ENCODE measurements at regions of chr12 and their contacts with region 1.

Region 1: GRCh38 chr12:40107098-40107802 is 1.4 kb upstream of the SLC2A13 start:
- DNase-seq: peak; percentile 82 to 92 (median 88)
- H3K4me3 ChIP-seq: peak overlapping the region; percentile 9 to 97 (median 83)
- H3K27ac ChIP-seq: peak overlapping the region in 27 of 59 donors; percentile 0 to 90 (median 79)
- H3K27me3 ChIP-seq: peaks cover 0 to 6% (median 0%) of the 10 kb centered on the region in 45 donors
- CTCF ChIP-seq: peak; percentile 89 to 100 (median 97)

Region 2: DNA sequence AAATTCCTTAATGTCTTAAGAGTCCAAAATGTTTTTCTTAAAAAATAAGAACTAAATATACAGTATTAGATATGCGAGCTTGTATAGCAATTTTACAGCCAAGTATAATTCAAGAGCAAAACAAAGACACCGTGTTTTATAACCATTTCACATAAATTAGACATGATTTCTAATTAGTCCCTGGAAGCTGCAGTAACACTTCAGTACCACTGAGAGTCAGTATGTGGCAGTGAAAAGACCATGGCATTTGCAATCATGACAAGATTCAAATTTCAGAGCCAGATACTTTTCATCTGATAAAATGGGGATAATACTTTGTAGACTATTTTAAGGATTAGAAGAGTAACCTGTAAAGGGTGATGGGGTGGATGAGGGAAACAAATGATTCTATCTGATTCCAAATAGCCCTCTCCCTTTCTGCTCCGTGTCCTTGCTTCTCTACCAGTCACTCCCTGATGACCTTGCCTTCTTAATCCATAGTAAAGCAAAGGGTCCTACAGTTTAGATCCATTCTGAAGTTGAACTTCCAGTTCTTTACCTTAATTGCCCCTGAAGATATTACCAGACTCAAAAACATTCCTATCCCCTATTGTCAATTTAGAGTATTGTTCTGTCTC is 342.2 kb before region 1 on chr12:
- intact Hi-C with region 1: loop called in 1 of 2 experiments (anchors 5 kb)
- DNase-seq: no peak
- H3K4me3 ChIP-seq: no peak overlapping the region
- H3K27ac ChIP-seq: no peak overlapping the region
- H3K27me3 ChIP-seq: no peaks in the 10 kb centered on the region
- CTCF ChIP-seq: peak; percentile 45 to 84 (median 74)

Region 3: DNA sequence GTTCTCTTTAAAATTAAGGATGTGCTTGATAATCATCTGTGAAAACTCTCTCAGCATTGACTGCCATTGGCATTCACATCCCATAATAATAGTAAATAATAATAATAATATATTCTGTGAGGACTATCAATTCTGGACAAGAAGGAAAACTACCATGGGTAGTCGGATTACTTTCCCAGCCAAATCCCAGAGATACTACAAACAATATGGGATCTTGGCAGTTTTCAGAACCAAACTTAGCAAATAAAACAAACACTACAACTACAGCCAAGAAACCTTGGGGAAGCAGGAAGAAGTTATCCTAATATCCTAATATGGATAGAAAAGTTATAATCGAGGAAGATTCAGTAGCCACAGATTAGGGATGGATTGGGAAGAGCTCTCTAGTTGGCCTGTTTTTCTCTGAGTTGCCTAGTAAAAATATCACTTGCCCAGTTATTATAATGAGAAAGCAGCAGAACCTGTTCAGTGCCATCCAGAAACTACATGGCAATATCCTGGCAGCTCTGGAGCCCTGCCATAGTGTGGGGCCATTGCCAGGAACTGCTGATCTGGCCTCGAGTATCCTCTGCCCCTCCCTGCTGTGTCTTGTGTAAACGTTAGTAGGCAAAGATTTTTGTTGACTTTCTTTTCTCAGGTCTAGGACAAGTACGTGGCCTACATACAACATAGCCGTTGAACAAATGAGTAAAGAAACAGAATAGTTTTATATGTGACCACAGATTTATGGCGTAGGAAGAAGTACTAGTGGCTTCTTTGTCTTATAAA is 194.9 kb before region 1 on chr12:
- intact Hi-C with region 1: no loop called
- DNase-seq: peak in 1 of 10 donors; percentile 63
- H3K4me3 ChIP-seq: no peak overlapping the region
- H3K27ac ChIP-seq: no peak overlapping the region
- H3K27me3 ChIP-seq: no peaks in the 10 kb centered on the region
- CTCF ChIP-seq: no peak

Region 4: DNA sequence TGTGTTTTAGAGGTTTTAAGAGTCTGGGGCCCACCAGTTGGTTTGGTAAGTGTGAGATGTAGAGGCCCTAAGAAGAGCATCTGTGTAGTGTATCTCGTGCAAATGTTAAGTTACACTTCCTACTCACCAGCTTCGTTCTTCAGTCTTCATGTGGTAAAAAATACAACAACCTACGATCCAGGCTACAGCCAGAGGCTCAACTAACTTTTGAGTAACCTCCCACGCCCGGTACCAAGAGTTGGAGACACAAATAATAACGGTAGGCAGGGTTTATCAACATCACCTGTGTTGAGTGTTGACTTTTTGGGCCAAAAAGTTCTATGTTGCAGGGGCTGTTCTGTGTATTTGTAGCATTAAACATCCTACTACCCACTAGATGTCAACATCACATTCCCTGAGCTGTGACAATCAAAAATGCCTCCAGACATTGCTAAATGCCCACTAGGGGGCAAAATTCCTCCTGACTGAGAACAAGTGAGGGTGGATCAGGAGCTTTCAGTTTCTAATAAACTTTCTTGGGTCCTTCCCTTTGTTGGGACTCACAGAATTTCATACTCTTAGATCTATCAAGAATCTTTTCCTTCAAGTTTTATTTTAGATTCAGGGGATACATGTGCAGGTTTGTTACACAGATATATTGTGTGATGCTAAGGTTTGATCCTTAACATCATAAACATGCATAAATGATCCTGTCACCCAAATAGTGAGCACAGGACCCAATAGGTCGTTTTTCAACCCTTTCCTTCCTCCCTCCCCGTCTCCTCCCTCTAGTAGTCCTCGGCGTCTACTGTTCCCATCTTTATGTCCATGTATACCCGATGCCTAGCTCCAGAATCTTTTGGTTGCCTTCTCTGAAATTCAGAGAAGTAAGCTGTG is 96.1 kb before region 1 on chr12:
- intact Hi-C with region 1: loop called (anchors 1 to 5 kb)
- DNase-seq: peak in 3 of 10 donors; percentile 25 to 59 (median 25)
- H3K4me3 ChIP-seq: peak overlapping the region in 38 of 59 donors; percentile 3 to 50 (median 25)
- H3K27ac ChIP-seq: peak overlapping the region in 2 of 59 donors; percentile 17 to 25
- H3K27me3 ChIP-seq: no peaks in the 10 kb centered on the region
- CTCF ChIP-seq: peak; percentile 68 to 93 (median 81)

Region 5: GRCh38 chr12:40312982-40313576 is 205.8 kb after region 1 on chr12:
- intact Hi-C with region 1: loop called in 1 of 2 experiments (anchors 5 kb)
- DNase-seq: no peak
- H3K4me3 ChIP-seq: peak overlapping the region in 9 of 59 donors; percentile 1 to 29 (median 6)
- H3K27ac ChIP-seq: no peak overlapping the region
- H3K27me3 ChIP-seq: no peaks in the 10 kb centered on the region
- CTCF ChIP-seq: peak in 54 of 56 donors; percentile 5 to 71 (median 54)